ENCODE measurements at regions of chr22 and their contacts with region 1.

Region 1: GRCh38 chr22:42863349-42863961 is 6.4 kb upstream of the ARFGAP3 start:
- DNase-seq: peak; percentile 76
- ATAC-seq: peak; percentile 78
- H3K4me3 Mint-ChIP-seq: no peak overlapping the region
- H3K27ac Mint-ChIP-seq: peak overlapping the region; percentile 75
- H3K4me1 Mint-ChIP-seq: peaks cover 19% of the 10 kb centered on the region
- H3K27me3 Mint-ChIP-seq: peaks cover 6% of the 10 kb centered on the region

Region 2: DNA sequence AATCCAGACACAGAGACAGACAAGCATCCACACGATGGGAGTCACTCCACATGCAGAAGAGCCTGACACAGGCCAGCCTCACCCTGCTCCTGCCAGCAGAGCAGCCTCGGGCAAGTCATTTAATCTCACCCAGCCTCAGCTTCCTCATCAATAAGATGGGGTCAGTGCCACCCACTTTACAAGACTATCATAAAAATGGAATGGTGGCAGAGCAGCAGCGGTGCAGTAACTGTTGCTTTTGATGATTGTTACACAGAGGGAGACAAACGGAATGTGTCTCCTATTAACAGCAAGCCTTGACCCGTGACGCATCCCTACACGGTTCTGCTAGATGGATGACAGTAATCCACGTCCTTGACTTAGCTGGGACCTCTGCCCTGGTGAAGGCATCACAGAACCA is 19.7 kb after region 1 on chr22:
- CTCF ChIA-PET with region 1: no interaction called
- POLR2A ChIA-PET with region 1: no interaction called
- intact Hi-C with region 1: no loop called
- DNase-seq: no peak
- ATAC-seq: no peak
- H3K4me3 Mint-ChIP-seq: no peak overlapping the region
- H3K27ac Mint-ChIP-seq: no peak overlapping the region
- H3K4me1 Mint-ChIP-seq: no peaks in the 10 kb centered on the region
- H3K27me3 Mint-ChIP-seq: no peaks in the 10 kb centered on the region

Region 3: GRCh38 chr22:42964994-42965699 is 101.7 kb after region 1 on chr22:
- CTCF ChIA-PET with region 1: no interaction called
- POLR2A ChIA-PET with region 1: no interaction called
- intact Hi-C with region 1: loop called in 1 of 2 experiments (anchors 2 kb)
- DNase-seq: peak; percentile 33
- ATAC-seq: peak; percentile 65
- H3K4me3 Mint-ChIP-seq: no peak overlapping the region
- H3K27ac Mint-ChIP-seq: peak overlapping the region; percentile 59
- H3K4me1 Mint-ChIP-seq: peaks cover 54% of the 10 kb centered on the region
- H3K27me3 Mint-ChIP-seq: no peaks in the 10 kb centered on the region

Region 4: GRCh38 chr22:43036282-43036829 is 172.9 kb after region 1 on chr22:
- CTCF ChIA-PET with region 1: interaction called, 4 read pairs
- POLR2A ChIA-PET with region 1: no interaction called
- intact Hi-C with region 1: loop called in 1 of 2 experiments (anchors 1 kb)
- DNase-seq: no peak
- ATAC-seq: no peak
- H3K4me3 Mint-ChIP-seq: no peak overlapping the region
- H3K27ac Mint-ChIP-seq: no peak overlapping the region
- H3K4me1 Mint-ChIP-seq: peaks cover 4% of the 10 kb centered on the region
- H3K27me3 Mint-ChIP-seq: no peaks in the 10 kb centered on the region

Measured in activated CD4-positive, alpha-beta T cell treated with anti-CD3 and anti-CD28 coated beads for 36 hours (primary cell).